BJ (cell line): ENCODE measurements at regions of chr18 and their contacts with region 1.

Region 1: GRCh38 chr18:54150226-54150625 is 74.2 kb downstream of the MBD2 start:
- DNase-seq: no peak
- H3K4me3 ChIP-seq: no peak overlapping the region
- H3K27me3 ChIP-seq: no peaks in the 10 kb centered on the region
- CTCF ChIP-seq: no peak

Region 2: GRCh38 chr18:54033052-54033451 is 117.2 kb before region 1 on chr18:
- CTCF ChIA-PET with region 1: no interaction called
- POLR2A ChIA-PET with region 1: no interaction called
- DNase-seq: no peak
- H3K4me3 ChIP-seq: no peak overlapping the region
- H3K27me3 ChIP-seq: no peaks in the 10 kb centered on the region
- CTCF ChIP-seq: no peak

Region 3: GRCh38 chr18:54162431-54162830 is 12.2 kb after region 1 on chr18:
- CTCF ChIA-PET with region 1: interaction called, 12 read pairs
- POLR2A ChIA-PET with region 1: no interaction called
- DNase-seq: peak; percentile 46
- H3K4me3 ChIP-seq: no peak overlapping the region
- H3K27me3 ChIP-seq: no peaks in the 10 kb centered on the region
- CTCF ChIP-seq: no peak